CD8-positive, alpha-beta T cell (primary cell): ENCODE measurements at regions of chr9 and their contacts with region 1.

Region 1: DNA sequence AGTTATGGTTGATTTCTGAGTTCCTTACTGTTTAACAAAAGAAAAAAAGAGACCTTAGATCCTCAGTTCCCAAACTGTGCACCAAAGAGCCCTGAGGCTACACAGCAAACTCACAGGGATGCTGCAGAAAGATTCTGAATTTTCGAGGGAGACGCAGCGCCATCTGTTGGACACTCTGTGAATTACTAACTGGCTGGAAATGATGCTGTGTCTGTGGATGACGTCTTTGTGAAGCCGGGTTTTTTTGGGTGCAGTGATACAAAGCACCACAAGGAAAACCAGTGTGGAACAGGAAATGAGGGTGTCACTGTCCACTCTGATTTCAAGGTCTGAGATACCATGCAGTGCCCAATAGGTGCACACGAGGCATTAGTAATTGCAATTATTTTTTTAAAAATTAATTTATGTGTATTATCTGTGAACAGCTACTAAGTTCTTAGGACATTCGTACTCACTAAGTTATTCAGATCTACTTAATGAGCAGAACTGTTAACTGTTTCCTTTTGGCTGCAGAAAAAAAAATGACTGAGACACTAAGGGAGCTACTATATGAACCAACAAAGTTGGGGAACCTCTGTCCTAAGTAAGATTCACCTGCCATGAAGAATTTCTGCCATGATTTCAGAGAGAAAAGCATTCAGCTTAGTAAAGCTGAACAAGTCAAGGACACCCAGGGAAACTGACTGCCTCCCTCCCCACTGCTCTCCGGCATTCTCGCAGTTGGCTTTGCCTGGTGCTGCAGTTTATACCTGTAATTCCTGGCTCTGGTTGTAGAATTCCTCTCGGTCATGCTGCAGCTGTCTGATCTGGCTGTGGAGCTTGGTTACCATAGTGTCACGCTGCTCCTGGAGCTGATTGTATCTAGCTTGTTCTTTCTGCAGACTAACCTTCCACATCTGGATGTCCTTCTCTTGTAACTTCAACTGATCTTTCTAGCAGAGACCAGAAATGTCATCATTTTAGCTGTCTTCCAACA is 23.4 kb downstream of the SPACA9 start:
- DNase-seq: peak; percentile 54 to 90 (median 76)
- ATAC-seq: peak; percentile 99
- H3K4me3 ChIP-seq: no peak overlapping the region
- H3K4me3 Mint-ChIP-seq: no peak overlapping the region
- H3K27ac ChIP-seq: no peak overlapping the region
- H3K27ac Mint-ChIP-seq: peak overlapping the region; percentile 19
- H3K4me1 ChIP-seq: no peaks in the 10 kb centered on the region
- H3K4me1 Mint-ChIP-seq: peaks cover 3% of the 10 kb centered on the region
- H3K27me3 ChIP-seq: no peaks in the 10 kb centered on the region
- H3K27me3 Mint-ChIP-seq: no peaks in the 10 kb centered on the region
- CTCF ChIP-seq: peak; percentile 91

Region 2: GRCh38 chr9:132849185-132849706 is 52.9 kb before region 1 on chr9:
- CTCF ChIA-PET with region 1: interaction called, 15 read pairs
- POLR2A ChIA-PET with region 1: no interaction called
- intact Hi-C with region 1: loop called in 1 of 2 experiments (anchors 5 kb)
- DNase-seq: peak in 1 of 9 experiments; percentile 30
- ATAC-seq: peak; percentile 62
- H3K4me3 ChIP-seq: no peak overlapping the region
- H3K4me3 Mint-ChIP-seq: peak overlapping the region; percentile 67
- H3K27ac ChIP-seq: no peak overlapping the region
- H3K27ac Mint-ChIP-seq: peak overlapping the region; percentile 86
- H3K4me1 ChIP-seq: no peaks in the 10 kb centered on the region
- H3K4me1 Mint-ChIP-seq: peaks cover 23% of the 10 kb centered on the region
- H3K27me3 ChIP-seq: no peaks in the 10 kb centered on the region
- H3K27me3 Mint-ChIP-seq: no peaks in the 10 kb centered on the region
- CTCF ChIP-seq: no peak

Region 3: GRCh38 chr9:132877824-132878694 is 24.1 kb before region 1 on chr9 and contains the start of gene AK8:
- CTCF ChIA-PET with region 1: interaction called, 31 read pairs
- POLR2A ChIA-PET with region 1: no interaction called
- intact Hi-C with region 1: loop called in 1 of 2 experiments (anchors 2 kb)
- DNase-seq: peak; percentile 55 to 88 (median 73)
- ATAC-seq: peak; percentile 88
- H3K4me3 ChIP-seq: peak within 1 kb of the TSS; percentile 96 to 98
- H3K4me3 Mint-ChIP-seq: peak within 1 kb of the TSS; percentile 81
- H3K27ac ChIP-seq: peak within 1 kb of the TSS; percentile 63 to 73
- H3K27ac Mint-ChIP-seq: peak within 1 kb of the TSS; percentile 88
- H3K4me1 ChIP-seq: peaks cover 14% of the 10 kb centered on the region
- H3K4me1 Mint-ChIP-seq: peaks cover 17% of the 10 kb centered on the region
- H3K27me3 ChIP-seq: no peaks in the 10 kb centered on the region
- H3K27me3 Mint-ChIP-seq: no peaks in the 10 kb centered on the region
- CTCF ChIP-seq: no peak
- total RNA-seq, gene AK8: not detected

Region 4: DNA sequence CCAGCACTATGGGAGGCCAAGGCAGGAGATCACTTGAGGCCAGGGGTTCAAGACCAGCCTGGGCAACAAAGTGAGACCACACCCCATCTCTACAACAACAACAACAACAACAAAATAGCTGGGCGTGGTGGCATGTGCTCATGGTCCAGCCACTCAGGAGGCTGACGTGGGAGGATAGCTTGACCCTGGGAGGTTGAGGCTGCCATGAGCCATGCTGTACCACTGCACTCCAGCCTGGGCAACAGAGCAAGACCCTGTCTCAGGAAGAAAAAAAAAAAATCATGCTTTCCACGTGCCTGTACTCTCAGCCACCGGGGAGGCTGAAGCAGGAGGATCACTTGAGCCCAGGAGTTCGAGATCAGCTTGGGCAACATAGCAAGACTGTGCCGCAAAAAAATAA is 12.8 kb after region 1 on chr9:
- CTCF ChIA-PET with region 1: interaction called, 13 read pairs
- POLR2A ChIA-PET with region 1: no interaction called
- intact Hi-C with region 1: no loop called
- DNase-seq: no peak
- ATAC-seq: no peak
- H3K4me3 ChIP-seq: no peak overlapping the region
- H3K4me3 Mint-ChIP-seq: no peak overlapping the region
- H3K27ac ChIP-seq: no peak overlapping the region
- H3K27ac Mint-ChIP-seq: no peak overlapping the region
- H3K4me1 ChIP-seq: no peaks in the 10 kb centered on the region
- H3K4me1 Mint-ChIP-seq: no peaks in the 10 kb centered on the region
- H3K27me3 ChIP-seq: no peaks in the 10 kb centered on the region
- H3K27me3 Mint-ChIP-seq: no peaks in the 10 kb centered on the region
- CTCF ChIP-seq: no peak

Region 5: DNA sequence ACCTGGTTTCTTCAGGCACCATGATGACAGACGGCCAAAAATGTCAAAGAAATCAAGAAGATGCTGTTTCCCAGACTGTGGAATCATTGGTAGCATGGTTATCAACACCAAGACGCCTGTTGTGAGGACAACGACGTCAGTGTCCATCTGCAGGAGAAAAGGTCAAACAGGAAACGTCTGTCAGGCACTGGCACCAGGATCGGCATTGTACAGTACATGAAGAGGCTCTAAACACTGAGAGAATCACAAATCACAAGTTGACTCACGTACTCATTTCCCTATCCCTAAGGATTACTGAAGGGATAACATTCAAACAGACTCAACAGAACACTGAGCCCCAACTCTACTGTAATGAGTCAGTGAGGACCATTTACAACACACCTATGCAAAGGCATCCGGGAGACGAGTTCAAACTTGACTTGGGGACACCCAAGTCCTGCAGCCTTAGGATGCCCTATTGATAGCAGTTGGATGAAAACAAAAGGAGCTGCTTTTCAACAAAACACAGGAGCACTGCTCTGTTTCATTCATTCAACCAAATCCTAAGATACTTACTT is 21.3 kb after region 1 on chr9:
- CTCF ChIA-PET with region 1: interaction called, 11 read pairs
- POLR2A ChIA-PET with region 1: no interaction called
- intact Hi-C with region 1: no loop called
- DNase-seq: no peak
- ATAC-seq: no peak
- H3K4me3 ChIP-seq: no peak overlapping the region
- H3K4me3 Mint-ChIP-seq: no peak overlapping the region
- H3K27ac ChIP-seq: no peak overlapping the region
- H3K27ac Mint-ChIP-seq: no peak overlapping the region
- H3K4me1 ChIP-seq: no peaks in the 10 kb centered on the region
- H3K4me1 Mint-ChIP-seq: no peaks in the 10 kb centered on the region
- H3K27me3 ChIP-seq: no peaks in the 10 kb centered on the region
- H3K27me3 Mint-ChIP-seq: no peaks in the 10 kb centered on the region
- CTCF ChIP-seq: no peak

Region 6: DNA sequence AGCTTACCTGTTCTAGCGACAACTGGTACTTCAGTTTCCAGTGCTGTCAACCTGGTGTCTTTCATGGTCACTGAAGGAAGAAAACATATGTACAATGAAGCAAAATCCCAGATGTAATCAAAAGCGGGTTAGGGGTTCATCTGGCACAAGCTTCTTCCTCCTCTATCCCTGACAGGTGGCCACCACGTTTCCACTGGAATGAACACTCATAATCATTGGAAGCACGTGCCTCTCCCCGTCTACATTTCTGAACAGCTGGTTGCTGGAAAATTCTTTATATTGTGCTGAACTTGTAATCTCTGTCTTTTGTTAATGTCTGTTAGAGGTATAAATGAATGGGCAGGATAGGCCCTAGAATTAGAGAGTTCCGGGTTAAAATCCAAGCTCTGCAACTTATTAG is 32.9 kb after region 1 on chr9:
- CTCF ChIA-PET with region 1: interaction called, 20 read pairs
- POLR2A ChIA-PET with region 1: no interaction called
- intact Hi-C with region 1: no loop called
- DNase-seq: no peak
- ATAC-seq: no peak
- H3K4me3 ChIP-seq: no peak overlapping the region
- H3K4me3 Mint-ChIP-seq: no peak overlapping the region
- H3K27ac ChIP-seq: no peak overlapping the region
- H3K27ac Mint-ChIP-seq: no peak overlapping the region
- H3K4me1 ChIP-seq: no peaks in the 10 kb centered on the region
- H3K4me1 Mint-ChIP-seq: peaks cover 9% of the 10 kb centered on the region
- H3K27me3 ChIP-seq: no peaks in the 10 kb centered on the region
- H3K27me3 Mint-ChIP-seq: no peaks in the 10 kb centered on the region
- CTCF ChIP-seq: no peak

Region 7: DNA sequence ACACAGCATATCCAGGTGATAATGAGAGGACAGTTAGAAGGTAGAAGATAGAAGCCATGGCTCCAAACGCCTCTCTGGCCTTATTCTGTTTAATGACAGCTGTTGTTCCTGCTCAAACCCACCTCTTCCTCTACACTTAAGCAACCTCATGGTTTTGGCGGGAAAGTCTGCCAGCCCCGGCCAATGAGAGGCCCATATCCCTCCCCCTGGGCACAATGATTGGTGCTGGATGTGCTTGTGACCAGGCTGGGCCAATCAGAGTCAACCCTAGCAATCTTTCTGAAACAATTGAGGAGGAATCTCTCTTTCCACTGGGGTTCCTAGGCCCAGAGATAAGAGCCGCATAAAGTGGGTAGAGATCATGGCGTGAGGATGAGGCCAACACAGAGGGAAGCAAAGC is 71.6 kb after region 1 on chr9:
- CTCF ChIA-PET with region 1: interaction called, 43 read pairs
- POLR2A ChIA-PET with region 1: no interaction called
- intact Hi-C with region 1: loop called (anchors 1 to 2 kb)
- DNase-seq: peak in 1 of 9 experiments; percentile 28
- ATAC-seq: peak; percentile 41
- H3K4me3 ChIP-seq: no peak overlapping the region
- H3K4me3 Mint-ChIP-seq: no peak overlapping the region
- H3K27ac ChIP-seq: no peak overlapping the region
- H3K27ac Mint-ChIP-seq: no peak overlapping the region
- H3K4me1 ChIP-seq: peaks cover 3% of the 10 kb centered on the region
- H3K4me1 Mint-ChIP-seq: peaks cover 4% of the 10 kb centered on the region
- H3K27me3 ChIP-seq: peaks cover 6 to 8% of the 10 kb centered on the region in 2 experiments
- H3K27me3 Mint-ChIP-seq: peaks cover 19% of the 10 kb centered on the region
- CTCF ChIP-seq: no peak